Left colon (tissue), 2 donors: ENCODE measurements at regions of chr16 and their contacts with region 1.

Region 1: DNA sequence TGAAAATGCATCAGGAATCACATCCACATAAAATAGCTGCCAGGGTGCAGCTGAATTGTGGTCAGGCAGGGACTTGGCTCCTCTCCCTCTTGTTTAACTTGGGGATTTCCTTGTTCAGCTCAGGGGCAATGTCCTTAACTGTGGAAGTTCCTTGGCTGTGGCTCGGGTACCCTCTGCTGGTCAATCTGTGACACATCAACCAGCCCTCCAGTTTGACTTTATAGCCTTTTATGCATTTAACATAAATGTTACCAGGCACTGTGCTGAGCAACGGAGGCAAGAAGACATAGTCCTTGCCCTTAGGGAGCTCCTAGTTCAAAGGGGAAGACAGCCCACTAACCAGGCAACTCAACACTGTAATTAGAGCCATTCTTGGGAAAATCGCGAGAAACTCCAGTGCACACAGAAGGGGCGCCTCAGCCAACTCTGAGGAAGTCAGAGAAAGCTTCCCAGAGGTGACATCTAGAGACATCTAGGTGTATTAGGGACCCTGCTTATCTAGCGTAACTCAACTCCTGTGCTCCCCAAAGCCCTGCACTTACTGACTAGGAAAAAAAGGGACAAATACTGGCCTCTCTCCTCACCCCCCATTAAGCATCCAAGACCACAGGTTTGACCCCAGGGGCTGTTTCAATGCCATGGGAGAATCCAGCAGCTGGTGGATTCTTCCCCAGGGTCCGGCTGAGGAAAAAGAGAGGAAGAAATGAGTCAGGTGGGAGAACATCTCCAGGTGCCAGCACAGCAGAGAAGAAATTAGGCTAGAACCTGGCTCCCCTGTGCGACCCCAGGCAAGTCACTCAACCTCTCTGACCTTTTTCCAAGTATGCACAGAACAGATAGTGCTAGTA is 17.3 kb upstream of the EEF2K start:
- DNase-seq: peak; percentile 67 to 85
- ATAC-seq: peak; percentile 31

Region 2: GRCh38 chr16:21952793-21953540 is 235.9 kb before region 1 on chr16 and contains the start of gene UQCRC2:
- intact Hi-C with region 1: loop called in 1 of 2 experiments (anchors 5 kb)
- DNase-seq: peak; percentile 91 to 93
- ATAC-seq: peak; percentile 91
- total RNA-seq, gene UQCRC2: 513 to 643 TPM

Region 3: DNA sequence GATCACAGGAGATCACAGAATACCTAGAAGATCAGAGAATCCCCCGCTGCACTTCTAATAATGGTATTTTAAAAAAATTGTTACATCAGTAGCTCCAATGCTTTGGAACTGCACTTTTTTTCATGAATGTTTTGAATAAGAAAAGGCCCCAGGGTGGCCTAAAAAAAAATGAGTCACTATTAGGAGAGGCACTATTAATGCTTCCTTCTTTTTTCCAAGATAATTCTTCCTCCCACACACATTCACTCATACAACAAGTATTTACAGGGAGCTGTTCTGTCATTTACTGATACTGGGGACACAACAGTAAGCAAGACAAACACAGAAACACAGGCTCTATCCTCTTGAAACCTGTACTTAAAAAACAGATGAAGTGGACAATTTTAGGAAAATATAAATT is 187.2 kb before region 1 on chr16:
- intact Hi-C with region 1: loop called in 1 of 2 experiments (anchors 5 kb)
- DNase-seq: no peak
- ATAC-seq: no peak